ENCODE measurements at regions of chr6 and their contacts with region 1.

Region 1: DNA sequence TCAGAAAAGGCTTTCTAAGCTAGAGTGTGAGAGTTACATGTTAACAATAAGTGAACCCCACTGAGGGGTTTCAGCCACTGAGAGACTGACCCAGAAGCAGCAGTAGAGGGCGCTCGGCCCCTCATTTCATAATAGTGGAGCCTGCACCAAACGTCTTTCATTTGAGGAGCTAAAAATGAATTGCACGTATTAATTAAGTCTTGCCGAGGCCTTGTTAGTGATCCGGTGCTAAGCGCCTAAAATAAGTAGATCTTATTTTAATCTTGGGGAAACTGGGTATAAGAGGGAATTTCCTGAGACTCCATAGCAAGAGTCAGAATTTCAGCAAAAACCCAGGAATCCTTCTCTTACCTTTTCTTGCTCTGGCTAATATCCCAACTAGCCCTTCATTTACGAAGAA is 209.7 kb downstream of the FARS2 start:
- DNase-seq: peak; percentile 74
- ATAC-seq: peak; percentile 72
- H3K4me3 ChIP-seq: no peak overlapping the region
- H3K27ac ChIP-seq: peak overlapping the region; percentile 78
- H3K4me1 ChIP-seq: peaks cover 30% of the 10 kb centered on the region
- H3K27me3 ChIP-seq: no peaks in the 10 kb centered on the region
- CTCF ChIP-seq: peak; percentile 97

Region 2: GRCh38 chr6:5457041-5457440 is 14.0 kb before region 1 on chr6:
- CTCF ChIA-PET with region 1: interaction called, 13 read pairs
- POLR2A ChIA-PET with region 1: no interaction called
- intact Hi-C with region 1: no loop called
- DNase-seq: peak; percentile 96
- ATAC-seq: peak; percentile 92
- H3K4me3 ChIP-seq: peak overlapping the region; percentile 36
- H3K27ac ChIP-seq: peak overlapping the region; percentile 91
- H3K4me1 ChIP-seq: peaks cover 40% of the 10 kb centered on the region
- H3K27me3 ChIP-seq: no peaks in the 10 kb centered on the region
- CTCF ChIP-seq: no peak

Region 3: GRCh38 chr6:5520796-5521195 is 49.8 kb after region 1 on chr6:
- CTCF ChIA-PET with region 1: interaction called, 6 read pairs
- POLR2A ChIA-PET with region 1: no interaction called
- intact Hi-C with region 1: loop called (anchors 1 kb)
- DNase-seq: no peak
- ATAC-seq: no peak
- H3K4me3 ChIP-seq: no peak overlapping the region
- H3K27ac ChIP-seq: no peak overlapping the region
- H3K4me1 ChIP-seq: no peaks in the 10 kb centered on the region
- H3K27me3 ChIP-seq: no peaks in the 10 kb centered on the region
- CTCF ChIP-seq: no peak

Region 4: GRCh38 chr6:5771759-5772390 is 300.8 kb after region 1 on chr6:
- CTCF ChIA-PET with region 1: no interaction called
- POLR2A ChIA-PET with region 1: no interaction called
- intact Hi-C with region 1: loop called (anchors 5 kb)
- DNase-seq: peak; percentile 3
- ATAC-seq: no peak; the same call in 1 of the 2 replicates
- H3K4me3 ChIP-seq: no peak overlapping the region
- H3K27ac ChIP-seq: peak overlapping the region; percentile 85
- H3K4me1 ChIP-seq: peaks cover 18% of the 10 kb centered on the region
- H3K27me3 ChIP-seq: no peaks in the 10 kb centered on the region
- CTCF ChIP-seq: no peak

Region 5: GRCh38 chr6:6547110-6547879 is 1076.3 kb after region 1 on chr6:
- CTCF ChIA-PET with region 1: no interaction called
- POLR2A ChIA-PET with region 1: no interaction called
- intact Hi-C with region 1: loop called (anchors 1 kb)
- DNase-seq: peak; percentile 90
- ATAC-seq: peak; percentile 98
- H3K4me3 ChIP-seq: peak overlapping the region; percentile 56
- H3K27ac ChIP-seq: no peak overlapping the region
- H3K4me1 ChIP-seq: 0 out of 2 replicates have a peak, but pooled peaks cover 8% of the 10 kb centered on the region
- H3K27me3 ChIP-seq: peaks cover 52% of the 10 kb centered on the region
- CTCF ChIP-seq: peak; percentile 95

Measured in PC-3 (cell line).